H1 (cell line): ENCODE measurements at regions of chr17 and their contacts with region 1.

Region 1: GRCh38 chr17:2511462-2512369 is at the start of gene METTL16:
- DNase-seq: peak; percentile 84 to 95
- H3K4me3 ChIP-seq: peak within 1 kb of the TSS; percentile 94 to 100 (median 98)
- H3K27ac ChIP-seq: peak within 1 kb of the TSS; percentile 90
- H3K4me1 ChIP-seq: no peaks in the 10 kb centered on the region; a peak in 2 of 7 replicates
- H3K27me3 ChIP-seq: no peaks in the 10 kb centered on the region
- CTCF ChIP-seq: no peak
- EP300 ChIP-seq: no peak
- POLR2A ChIP-seq: peak; percentile 85 to 91; a peak in 2 of 3 replicates
- RAD21 ChIP-seq: no peak
- total RNA-seq, gene METTL16: 58.1 and 59.4 TPM in 2 replicates

Region 2: DNA sequence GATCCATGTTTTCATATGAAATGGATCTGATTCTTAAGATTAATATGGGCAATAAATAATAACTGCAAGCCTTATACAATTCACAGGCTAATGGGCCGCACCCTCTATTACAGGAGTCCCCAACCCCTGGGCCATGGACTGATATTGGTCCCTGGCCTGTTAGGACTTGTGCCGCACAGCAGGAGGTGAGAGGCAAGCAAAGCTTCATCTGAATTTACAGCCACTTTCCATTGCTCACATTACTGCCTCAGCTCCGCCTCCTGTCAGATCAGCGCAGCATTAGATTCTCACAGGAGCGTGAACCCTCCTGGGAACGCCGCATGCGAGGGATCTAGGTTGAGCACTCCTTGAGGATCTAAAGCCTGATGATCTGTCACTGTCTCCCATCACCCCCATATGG is 26.8 kb before region 1 on chr17:
- CTCF ChIA-PET with region 1: no interaction called
- POLR2A ChIA-PET with region 1: interaction called, 19 read pairs
- DNase-seq: peak in 1 of 2 experiments; percentile 49
- H3K4me3 ChIP-seq: no peak overlapping the region
- H3K27ac ChIP-seq: no peak overlapping the region
- H3K4me1 ChIP-seq: peaks cover 3 to 9% (median 4%) of the 10 kb centered on the region in 4 experiments; a peak in 6 of 7 replicates
- H3K27me3 ChIP-seq: no peaks in the 10 kb centered on the region
- CTCF ChIP-seq: no peak
- EP300 ChIP-seq: no peak
- POLR2A ChIP-seq: no peak
- RAD21 ChIP-seq: no peak

Region 3: GRCh38 chr17:2500446-2500845 is 11.3 kb before region 1 on chr17:
- CTCF ChIA-PET with region 1: interaction called, 3 read pairs
- POLR2A ChIA-PET with region 1: interaction called, 18 read pairs
- DNase-seq: no peak
- H3K4me3 ChIP-seq: no peak overlapping the region
- H3K27ac ChIP-seq: no peak overlapping the region
- H3K4me1 ChIP-seq: no peaks in the 10 kb centered on the region
- H3K27me3 ChIP-seq: no peaks in the 10 kb centered on the region
- CTCF ChIP-seq: no peak
- EP300 ChIP-seq: no peak
- POLR2A ChIP-seq: no peak
- RAD21 ChIP-seq: no peak